RWPE1 (cell line): ENCODE measurements at regions of chr20 and their contacts with region 1.

Region 1: DNA sequence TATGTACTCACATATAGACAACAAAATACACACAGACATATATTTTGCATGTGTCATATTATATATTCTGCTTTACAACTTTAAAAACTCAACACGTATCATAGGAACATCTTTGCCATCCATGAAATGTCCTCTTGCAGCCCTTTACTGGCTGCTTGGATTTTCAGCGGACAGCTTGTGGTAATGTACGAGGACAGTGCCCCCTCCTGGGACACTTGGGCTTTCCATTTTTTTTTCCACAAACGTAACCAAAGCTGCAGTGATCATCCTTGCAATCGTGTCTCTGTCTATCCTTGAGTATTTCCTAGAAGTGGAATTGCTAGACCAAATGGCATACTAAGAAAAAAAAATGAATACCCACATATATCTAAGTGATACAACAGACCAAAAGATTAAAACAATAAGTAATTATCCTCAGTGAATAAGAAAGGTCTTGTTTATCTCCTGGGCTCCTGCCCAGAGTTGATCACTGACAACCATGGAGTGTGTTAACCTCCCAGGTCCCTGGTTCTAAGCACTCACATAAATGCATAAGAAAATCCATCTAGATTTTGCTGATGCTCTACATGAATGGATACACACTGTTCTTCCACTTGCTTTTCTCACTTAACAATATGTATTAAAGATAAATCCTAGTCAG is 18.1 kb downstream of the BPI start:
- DNase-seq: peak; percentile 82
- H3K27ac ChIP-seq: no peak overlapping the region
- CTCF ChIP-seq: peak; percentile 81

Region 2: DNA sequence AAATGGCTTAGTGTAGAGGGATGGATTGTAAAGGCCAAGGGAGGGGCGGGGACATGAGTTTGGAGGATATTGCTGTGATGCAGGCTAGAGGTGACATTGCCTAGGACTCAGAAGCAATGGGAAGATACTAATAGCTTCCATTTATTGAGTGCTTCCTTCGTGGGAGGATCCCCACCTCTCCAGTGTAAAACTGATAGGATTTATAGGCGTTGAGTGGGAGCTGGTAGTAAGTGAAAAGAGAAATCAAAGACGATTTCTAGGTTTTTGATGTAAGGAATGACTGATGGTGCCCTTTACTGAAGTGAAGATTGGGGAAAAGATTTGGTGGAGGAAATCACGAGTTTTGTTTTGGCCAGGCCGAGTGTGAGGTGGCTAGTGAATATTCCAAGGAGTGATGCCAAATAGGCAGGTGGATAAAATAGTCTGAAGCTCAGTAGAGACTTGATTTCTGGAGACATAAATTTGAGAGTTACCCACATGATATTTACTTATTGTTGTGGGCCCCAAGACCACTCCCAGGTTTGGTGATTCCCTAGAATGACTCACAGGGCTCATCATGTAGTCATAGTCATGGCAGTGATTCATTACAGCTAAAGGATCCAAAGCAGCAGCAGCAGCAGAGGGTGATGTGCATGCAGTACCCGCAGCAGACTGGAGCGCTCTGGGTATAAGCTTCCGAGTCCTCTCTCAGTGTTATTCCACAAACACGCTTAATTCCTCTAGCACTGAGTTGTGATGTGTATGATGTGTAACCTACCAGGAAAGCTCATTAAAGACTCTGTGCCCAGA is 278.4 kb before region 1 on chr20:
- CTCF ChIA-PET with region 1: no interaction called
- POLR2A ChIA-PET with region 1: no interaction called
- DNase-seq: peak; percentile 99
- H3K27ac ChIP-seq: peak overlapping the region; percentile 37
- CTCF ChIP-seq: no peak

Region 3: GRCh38 chr20:38229376-38230252 is 92.5 kb before region 1 on chr20:
- CTCF ChIA-PET with region 1: interaction called, 19 read pairs
- POLR2A ChIA-PET with region 1: no interaction called
- DNase-seq: peak; percentile 68
- H3K27ac ChIP-seq: no peak overlapping the region
- CTCF ChIP-seq: peak; percentile 30; the same call in 1 of the 2 replicates

Region 4: DNA sequence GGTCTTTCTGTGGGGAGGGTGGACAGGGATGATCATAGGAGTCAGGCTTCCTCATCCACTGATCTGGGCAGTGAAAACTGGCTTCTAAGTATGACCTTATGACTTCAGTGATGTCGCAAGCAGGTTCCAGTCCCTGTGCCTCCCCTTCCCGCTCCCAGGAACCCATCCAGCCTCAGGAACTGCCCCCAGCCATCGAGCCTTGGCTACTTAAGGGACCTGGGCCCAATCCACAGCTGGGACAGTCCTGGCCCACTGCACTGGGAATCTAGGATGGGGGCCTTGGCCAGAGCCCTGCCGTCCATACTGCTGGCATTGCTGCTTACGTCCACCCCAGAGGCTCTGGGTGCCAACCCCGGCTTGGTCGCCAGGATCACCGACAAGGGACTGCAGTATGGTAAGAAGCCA is 24.2 kb after region 1 on chr20 and contains the start of gene LBP:
- CTCF ChIA-PET with region 1: no interaction called
- POLR2A ChIA-PET with region 1: no interaction called
- DNase-seq: no peak
- H3K27ac ChIP-seq: no peak within 1 kb of the TSS
- CTCF ChIP-seq: no peak